ENCODE measurements at regions of chr3 and their contacts with region 1.

Region 1: DNA sequence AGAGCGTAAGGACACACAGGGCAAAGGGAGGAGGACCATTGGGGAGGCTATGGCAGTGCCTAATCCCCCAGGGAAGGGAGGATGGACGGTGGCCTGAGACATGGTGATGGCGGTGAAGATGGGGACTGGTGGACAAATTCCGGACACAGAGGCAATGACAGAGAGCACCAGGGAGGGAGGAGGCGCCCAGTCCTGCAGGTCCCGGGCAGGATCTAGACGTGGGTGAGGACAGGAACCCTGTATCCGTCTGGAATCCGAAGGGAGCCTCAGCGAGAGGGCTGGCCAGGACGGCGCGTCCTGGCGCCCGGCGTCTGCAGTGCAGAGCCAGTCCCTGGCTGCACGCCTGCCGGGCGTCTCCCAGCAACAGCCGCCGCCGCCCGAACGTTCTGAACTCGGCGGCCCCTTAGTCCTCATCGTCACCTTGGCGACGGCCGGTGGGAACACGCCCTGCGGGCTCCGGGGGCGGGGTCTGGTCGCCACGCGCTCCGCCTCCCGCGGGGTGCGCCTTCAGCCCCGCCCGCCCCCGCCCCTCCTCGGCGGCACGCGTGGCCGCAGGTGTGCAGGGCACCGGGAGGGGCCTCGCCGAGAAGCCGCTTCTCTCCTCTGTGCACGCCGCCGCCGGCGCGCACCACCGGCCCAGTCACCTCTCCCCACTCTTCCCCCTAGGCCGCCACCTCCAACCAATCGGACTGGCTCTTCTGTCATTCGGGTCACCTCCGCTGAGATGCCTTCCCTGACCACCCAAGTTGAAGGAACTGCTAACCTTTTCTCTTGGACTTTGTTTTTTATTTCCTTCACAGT is 11.6 kb downstream of the XIRP1 start:
- DNase-seq: peak; percentile 87
- H3K4me3 Mint-ChIP-seq: peak overlapping the region; percentile 73
- H3K27ac Mint-ChIP-seq: peak overlapping the region; percentile 40
- H3K4me1 Mint-ChIP-seq: peaks cover 34% of the 10 kb centered on the region
- H3K27me3 Mint-ChIP-seq: no peaks in the 10 kb centered on the region
- CTCF ChIP-seq: no peak

Region 2: DNA sequence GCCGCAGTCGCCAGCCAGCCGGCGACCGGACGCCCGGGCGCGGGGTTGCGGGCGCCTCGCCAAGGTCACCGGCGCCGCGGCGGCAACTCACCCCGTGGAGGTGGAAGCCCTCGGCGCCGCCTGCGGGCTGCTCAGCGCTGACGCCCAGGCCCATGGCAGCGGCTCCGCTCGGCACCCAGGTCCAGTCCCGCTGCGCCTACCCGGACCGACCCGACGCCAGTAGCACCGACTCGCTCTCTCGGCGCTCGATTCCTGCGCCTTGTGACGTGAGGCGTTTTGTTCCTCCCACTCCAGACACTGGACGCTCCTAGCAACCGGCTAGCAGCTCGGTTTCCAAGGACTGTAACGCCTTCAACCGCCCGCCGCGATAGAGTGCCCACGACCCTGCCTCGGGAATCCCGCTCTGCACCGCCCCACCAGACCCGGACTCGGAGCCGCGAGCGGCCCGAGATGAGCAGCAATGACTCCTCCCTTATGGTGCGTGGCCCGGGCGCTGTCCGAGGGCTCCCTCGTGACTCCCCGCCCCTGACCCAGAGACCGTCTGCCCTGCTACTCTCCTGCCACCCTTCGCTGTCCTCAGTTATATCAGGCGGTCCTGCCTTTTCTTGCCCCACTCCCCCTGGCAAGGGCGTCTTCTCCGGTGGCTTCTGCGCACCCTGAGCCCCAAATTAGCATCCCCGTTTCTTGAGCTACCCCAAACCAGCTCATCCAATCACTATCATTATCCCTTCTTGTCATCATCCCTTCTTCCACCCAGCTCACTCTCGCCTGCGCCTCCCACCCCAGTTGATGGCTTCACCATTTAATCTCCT is 73.2 kb before region 1 on chr3 and contains the starts of genes GORASP1 and TTC21A:
- CTCF ChIA-PET with region 1: interaction called, 7 read pairs
- POLR2A ChIA-PET with region 1: interaction called, 6 read pairs
- intact Hi-C with region 1: loop called (anchors 2 kb)
- DNase-seq: peak; percentile 84
- H3K4me3 Mint-ChIP-seq: peak within 1 kb of the TSS; percentile 94
- H3K27ac Mint-ChIP-seq: peak within 1 kb of the TSS; percentile 94
- H3K4me1 Mint-ChIP-seq: peaks cover 37% of the 10 kb centered on the region
- H3K27me3 Mint-ChIP-seq: no peaks in the 10 kb centered on the region
- CTCF ChIP-seq: no peak
- total RNA-seq, gene GORASP1: 34.4 and 40.7 TPM in 2 replicates
- total RNA-seq, gene TTC21A: 2.1 and 5.4 TPM in 2 replicates

Region 3: DNA sequence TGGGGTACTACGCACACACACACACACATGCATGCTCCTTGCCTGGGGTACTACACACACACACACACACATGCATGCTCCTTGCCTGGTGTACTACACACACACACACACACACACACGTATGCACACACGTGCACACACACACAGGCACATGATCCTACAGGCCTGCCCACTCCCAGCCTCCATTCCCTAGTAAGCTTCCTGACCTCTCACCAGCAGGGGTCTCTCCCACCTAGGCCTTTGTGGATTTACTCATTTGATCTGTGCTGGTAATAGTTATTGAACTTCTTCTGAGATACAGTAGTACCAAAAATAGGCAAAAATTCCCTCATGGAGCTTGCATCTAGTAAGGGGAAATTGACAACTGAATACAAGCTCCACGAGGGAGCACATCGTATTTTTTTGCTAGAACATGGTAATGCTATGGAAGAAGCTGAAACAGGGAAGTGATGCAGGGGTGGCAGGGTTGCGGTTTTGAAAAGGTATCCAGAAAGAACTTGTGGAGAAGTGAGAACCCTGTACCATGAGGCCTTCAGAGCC is 54.1 kb before region 1 on chr3:
- CTCF ChIA-PET with region 1: interaction called, 9 read pairs
- POLR2A ChIA-PET with region 1: interaction called, 3 read pairs
- intact Hi-C with region 1: loop called (anchors 2 kb)
- DNase-seq: peak; percentile 72
- H3K4me3 Mint-ChIP-seq: no peak overlapping the region
- H3K27ac Mint-ChIP-seq: no peak overlapping the region
- H3K4me1 Mint-ChIP-seq: peaks cover 12% of the 10 kb centered on the region
- H3K27me3 Mint-ChIP-seq: no peaks in the 10 kb centered on the region
- CTCF ChIP-seq: peak; percentile 51

Region 4: DNA sequence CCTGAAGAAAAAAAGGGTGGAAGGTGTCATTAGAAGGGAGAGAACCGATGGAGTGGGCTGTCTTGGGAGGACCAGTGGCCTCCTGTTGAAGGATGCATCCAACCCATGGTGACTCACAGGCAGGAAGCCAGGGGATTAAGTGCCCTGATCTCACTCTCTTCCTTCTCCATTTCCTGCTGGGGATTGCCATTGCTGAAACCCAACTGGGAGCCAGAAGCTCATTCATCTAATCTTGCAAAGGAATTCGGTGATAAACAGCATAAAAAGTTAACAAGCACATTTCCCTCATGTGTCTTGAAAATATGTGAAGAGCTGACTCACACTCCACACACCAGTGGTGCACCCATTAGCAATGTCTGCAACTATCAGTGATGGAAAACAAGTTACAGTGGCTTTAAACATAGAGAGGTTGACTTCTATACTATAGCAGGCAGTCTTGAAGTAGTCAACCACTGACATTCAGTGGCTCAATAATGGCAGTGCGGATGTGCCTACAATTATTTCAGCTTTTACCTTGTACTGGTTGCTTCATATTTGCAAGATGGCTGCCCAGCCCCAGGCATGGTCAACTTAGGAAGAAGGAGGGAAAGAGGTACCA is 14.5 kb before region 1 on chr3:
- CTCF ChIA-PET with region 1: interaction called, 5 read pairs
- POLR2A ChIA-PET with region 1: interaction called, 20 read pairs
- intact Hi-C with region 1: no loop called
- DNase-seq: peak; percentile 90
- H3K4me3 Mint-ChIP-seq: no peak overlapping the region
- H3K27ac Mint-ChIP-seq: no peak overlapping the region
- H3K4me1 Mint-ChIP-seq: peaks cover 14% of the 10 kb centered on the region
- H3K27me3 Mint-ChIP-seq: no peaks in the 10 kb centered on the region
- CTCF ChIP-seq: no peak

Region 5: DNA sequence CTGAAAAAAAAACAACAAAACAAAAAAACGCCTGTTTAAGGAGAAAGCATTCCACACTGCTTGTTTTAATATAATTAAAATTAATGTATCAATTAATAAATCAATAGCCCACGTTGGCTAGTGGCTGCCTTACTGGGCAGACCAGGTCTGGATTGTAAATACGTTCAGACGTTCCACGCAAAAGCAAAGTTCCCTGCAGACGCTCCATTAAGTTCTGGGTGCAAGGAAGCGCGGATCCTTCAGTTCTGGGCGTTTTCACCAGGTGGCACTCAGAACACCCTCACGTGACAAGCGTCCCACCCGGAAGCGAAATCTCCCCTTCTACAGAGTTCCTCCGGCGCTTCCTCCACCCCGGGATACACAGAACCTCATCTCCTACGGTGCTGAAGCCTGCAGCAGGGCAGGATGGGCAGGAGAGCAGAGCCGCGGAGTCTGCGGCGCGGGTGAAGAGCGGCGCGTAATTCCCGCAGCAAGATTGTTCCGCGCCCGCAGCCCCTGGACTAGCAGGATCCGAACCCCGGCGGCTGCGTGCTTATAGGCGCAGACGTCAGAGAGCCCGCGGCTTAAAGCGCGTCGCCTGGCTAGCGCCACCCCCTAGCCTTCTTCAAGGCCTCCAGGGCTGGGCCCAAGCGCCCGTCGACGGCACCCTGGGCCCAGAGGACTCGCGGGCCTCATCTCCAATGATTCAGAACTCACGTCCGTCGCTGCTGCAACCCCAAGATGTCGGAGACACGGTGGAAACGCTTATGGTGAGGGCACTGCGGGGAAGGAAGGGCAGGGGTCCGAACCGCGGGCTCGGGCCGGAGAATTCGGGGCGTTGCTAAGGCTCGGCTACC is 202.5 kb after region 1 on chr3 and contains the start of gene SLC25A38:
- CTCF ChIA-PET with region 1: no interaction called
- POLR2A ChIA-PET with region 1: interaction called, 3 read pairs
- intact Hi-C with region 1: loop called (anchors 10 kb)
- DNase-seq: peak; percentile 85
- H3K4me3 Mint-ChIP-seq: peak within 1 kb of the TSS; percentile 91
- H3K27ac Mint-ChIP-seq: peak within 1 kb of the TSS; percentile 91
- H3K4me1 Mint-ChIP-seq: peaks cover 30% of the 10 kb centered on the region
- H3K27me3 Mint-ChIP-seq: no peaks in the 10 kb centered on the region
- CTCF ChIP-seq: peak; percentile 8
- total RNA-seq, gene SLC25A38: 37.6 and 45.9 TPM in 2 replicates